CD4-positive, alpha-beta T cell (primary cell): ENCODE measurements at regions of chr9 and their contacts with region 1.

Region 1: DNA sequence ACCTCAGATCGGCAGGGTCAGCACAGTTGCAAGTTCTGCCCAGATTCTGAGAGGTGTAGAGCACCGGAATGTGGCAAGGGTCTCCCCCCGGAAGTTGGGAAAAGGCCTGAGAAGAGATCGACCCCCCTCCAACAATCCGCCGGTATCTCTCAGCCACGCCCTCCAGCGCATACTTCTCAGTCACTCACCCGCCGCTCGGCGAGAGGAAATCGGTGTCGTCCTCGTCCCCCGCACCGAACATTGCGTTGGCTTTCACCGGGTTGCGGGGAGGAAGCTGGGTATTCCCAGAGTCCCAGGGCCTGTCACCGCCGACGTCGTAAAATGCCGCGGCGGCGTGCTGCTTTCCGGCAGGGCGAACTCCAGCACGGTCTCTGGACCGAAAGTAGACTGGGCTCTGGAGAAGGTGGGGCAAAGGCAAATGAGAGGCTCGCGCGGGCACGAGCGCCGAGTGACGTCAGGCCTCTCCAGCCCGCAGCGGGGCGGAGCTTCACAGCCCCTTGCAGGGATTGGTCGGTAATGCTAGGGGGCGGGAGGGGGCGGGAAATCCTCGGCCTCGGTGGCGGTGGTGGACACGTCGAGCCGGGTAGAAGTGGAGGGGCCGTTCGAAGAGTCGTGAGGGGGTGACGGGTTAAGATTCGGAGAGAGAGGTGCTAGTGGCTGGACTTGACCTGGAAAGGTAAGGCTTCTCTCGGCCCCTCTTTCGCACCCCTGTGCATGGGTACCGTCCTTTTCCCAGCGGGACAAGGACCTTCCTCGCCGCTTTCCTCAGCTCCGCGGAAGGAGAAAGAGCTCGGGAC is at the starts of genes FKBP15 and SLC31A1:
- DNase-seq: peak; percentile 90 to 99 (median 94)
- ATAC-seq: peak; percentile 98
- H3K4me3 ChIP-seq: peak within 1 kb of the TSS; percentile 90
- H3K4me3 Mint-ChIP-seq: peak within 1 kb of the TSS; percentile 99
- H3K27ac ChIP-seq: peak within 1 kb of the TSS; percentile 82 to 84
- H3K27ac Mint-ChIP-seq: peak within 1 kb of the TSS; percentile 88
- H3K4me1 ChIP-seq: peaks cover 23% of the 10 kb centered on the region
- H3K4me1 Mint-ChIP-seq: peaks cover 59% of the 10 kb centered on the region
- H3K27me3 ChIP-seq: no peaks in the 10 kb centered on the region
- H3K27me3 Mint-ChIP-seq: no peaks in the 10 kb centered on the region
- CTCF ChIP-seq: no peak
- total RNA-seq, gene FKBP15: 11.9 to 14.2 TPM
- total RNA-seq, gene SLC31A1: 12.1 to 12.3 TPM

Region 2: DNA sequence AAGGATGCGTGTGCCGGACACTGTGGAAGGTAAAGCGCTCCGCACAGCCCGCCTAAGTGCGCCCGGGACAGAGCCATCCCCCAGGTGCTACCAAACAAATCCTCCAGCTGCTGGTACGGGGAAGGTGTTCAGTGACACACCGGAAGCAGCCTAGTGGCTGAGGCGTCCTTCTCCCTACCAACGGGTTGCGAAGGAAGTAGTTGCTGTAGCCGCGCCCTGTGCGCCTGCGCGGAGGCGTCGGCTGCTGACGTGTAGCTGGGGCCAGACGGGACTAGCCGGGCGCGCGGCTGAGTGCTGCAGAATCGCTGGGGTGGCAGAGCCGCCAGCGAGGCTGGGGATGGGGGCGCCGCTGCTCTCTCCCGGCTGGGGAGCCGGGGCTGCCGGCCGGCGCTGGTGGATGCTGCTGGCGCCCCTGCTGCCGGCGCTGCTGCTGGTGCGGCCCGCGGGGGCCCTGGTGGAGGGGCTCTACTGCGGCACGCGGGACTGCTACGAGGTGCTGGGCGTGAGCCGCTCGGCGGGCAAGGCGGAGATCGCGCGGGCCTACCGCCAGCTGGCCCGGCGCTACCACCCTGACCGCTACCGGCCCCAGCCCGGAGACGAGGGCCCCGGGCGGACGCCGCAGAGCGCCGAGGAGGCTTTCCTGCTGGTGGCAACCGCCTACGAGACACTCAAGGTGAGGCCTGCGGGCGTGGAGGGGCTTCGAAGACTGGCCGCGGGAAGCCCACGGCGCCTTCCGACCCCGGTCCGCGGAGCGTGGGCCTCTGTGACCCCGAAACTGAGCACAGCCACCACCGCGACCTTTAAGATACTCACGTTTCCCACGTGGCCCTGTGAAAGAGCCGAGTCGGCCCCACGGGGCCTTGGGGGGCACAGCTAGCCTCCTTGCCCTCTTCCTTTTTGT is 1589.9 kb before region 1 on chr9 and contains the start of gene DNAJC25:
- CTCF ChIA-PET with region 1: no interaction called
- POLR2A ChIA-PET with region 1: no interaction called
- intact Hi-C with region 1: loop called in 1 of 2 experiments (anchors 10 kb)
- DNase-seq: peak; percentile 91 to 100 (median 96)
- ATAC-seq: peak; percentile 92
- H3K4me3 ChIP-seq: peak within 1 kb of the TSS; percentile 74
- H3K4me3 Mint-ChIP-seq: peak within 1 kb of the TSS; percentile 99
- H3K27ac ChIP-seq: peak within 1 kb of the TSS; percentile 3 to 75
- H3K27ac Mint-ChIP-seq: peak within 1 kb of the TSS; percentile 90
- H3K4me1 ChIP-seq: peaks cover 18% of the 10 kb centered on the region
- H3K4me1 Mint-ChIP-seq: peaks cover 58% of the 10 kb centered on the region
- H3K27me3 ChIP-seq: no peaks in the 10 kb centered on the region
- H3K27me3 Mint-ChIP-seq: no peaks in the 10 kb centered on the region
- CTCF ChIP-seq: no peak
- total RNA-seq, gene DNAJC25: 4.5 to 4.8 TPM

Region 3: GRCh38 chr9:112486221-112487007 is 734.8 kb before region 1 on chr9 and contains the start of gene KIAA1958:
- CTCF ChIA-PET with region 1: no interaction called
- POLR2A ChIA-PET with region 1: no interaction called
- intact Hi-C with region 1: loop called in 1 of 2 experiments (anchors 2 kb)
- DNase-seq: peak; percentile 54 to 92 (median 76)
- ATAC-seq: peak; percentile 72
- H3K4me3 ChIP-seq: peak within 1 kb of the TSS; percentile 69
- H3K4me3 Mint-ChIP-seq: peak within 1 kb of the TSS; percentile 97
- H3K27ac ChIP-seq: peak within 1 kb of the TSS; percentile 44 to 62
- H3K27ac Mint-ChIP-seq: peak within 1 kb of the TSS; percentile 86
- H3K4me1 ChIP-seq: peaks cover 18% of the 10 kb centered on the region
- H3K4me1 Mint-ChIP-seq: peaks cover 45% of the 10 kb centered on the region
- H3K27me3 ChIP-seq: no peaks in the 10 kb centered on the region
- H3K27me3 Mint-ChIP-seq: no peaks in the 10 kb centered on the region
- CTCF ChIP-seq: no peak
- total RNA-seq, gene KIAA1958: 5.6 to 6.8 TPM

Region 4: DNA sequence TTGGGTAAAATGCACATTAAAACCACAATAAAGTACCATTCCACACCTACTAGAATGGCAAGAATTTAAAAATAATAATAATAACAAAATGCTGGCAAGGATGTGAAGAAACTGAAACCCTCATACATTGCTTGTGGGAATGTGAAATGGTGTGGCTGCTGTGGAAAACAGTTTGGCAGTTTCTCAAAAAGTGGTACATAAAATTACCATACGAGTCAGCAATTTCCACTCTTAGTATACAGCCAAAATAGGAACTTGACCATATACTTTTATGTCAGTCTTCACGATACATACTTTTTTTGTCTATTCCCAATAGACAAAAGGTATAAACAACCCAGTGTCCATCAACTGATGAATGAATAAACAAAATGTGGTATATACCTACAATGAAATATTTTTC is 15.8 kb before region 1 on chr9:
- CTCF ChIA-PET with region 1: no interaction called
- POLR2A ChIA-PET with region 1: no interaction called
- intact Hi-C with region 1: loop called in 1 of 2 experiments (anchors 1 kb)
- DNase-seq: no peak
- ATAC-seq: no peak
- H3K4me3 ChIP-seq: no peak overlapping the region
- H3K4me3 Mint-ChIP-seq: no peak overlapping the region
- H3K27ac ChIP-seq: no peak overlapping the region
- H3K27ac Mint-ChIP-seq: no peak overlapping the region
- H3K4me1 ChIP-seq: no peaks in the 10 kb centered on the region
- H3K4me1 Mint-ChIP-seq: no peaks in the 10 kb centered on the region
- H3K27me3 ChIP-seq: no peaks in the 10 kb centered on the region
- H3K27me3 Mint-ChIP-seq: no peaks in the 10 kb centered on the region
- CTCF ChIP-seq: no peak

Region 5: GRCh38 chr9:113275157-113276131 is 54.2 kb after region 1 on chr9 and contains the starts of genes CDC26 and PRPF4:
- CTCF ChIA-PET with region 1: interaction called, 10 read pairs
- POLR2A ChIA-PET with region 1: interaction called, 21 read pairs
- intact Hi-C with region 1: loop called (anchors 1 to 2 kb)
- DNase-seq: peak; percentile 88 to 98 (median 93)
- ATAC-seq: peak; percentile 91
- H3K4me3 ChIP-seq: peak within 1 kb of the TSS; percentile 77
- H3K4me3 Mint-ChIP-seq: no peak within 1 kb of the TSS
- H3K27ac ChIP-seq: peak within 1 kb of the TSS; percentile 93 to 94
- H3K27ac Mint-ChIP-seq: no peak within 1 kb of the TSS
- H3K4me1 ChIP-seq: peaks cover 6% of the 10 kb centered on the region
- H3K4me1 Mint-ChIP-seq: peaks cover 24% of the 10 kb centered on the region
- H3K27me3 ChIP-seq: no peaks in the 10 kb centered on the region
- H3K27me3 Mint-ChIP-seq: no peaks in the 10 kb centered on the region
- CTCF ChIP-seq: no peak
- total RNA-seq, gene CDC26: 15.8 to 18.0 TPM
- total RNA-seq, gene PRPF4: 23.4 to 25.5 TPM

Region 6: DNA sequence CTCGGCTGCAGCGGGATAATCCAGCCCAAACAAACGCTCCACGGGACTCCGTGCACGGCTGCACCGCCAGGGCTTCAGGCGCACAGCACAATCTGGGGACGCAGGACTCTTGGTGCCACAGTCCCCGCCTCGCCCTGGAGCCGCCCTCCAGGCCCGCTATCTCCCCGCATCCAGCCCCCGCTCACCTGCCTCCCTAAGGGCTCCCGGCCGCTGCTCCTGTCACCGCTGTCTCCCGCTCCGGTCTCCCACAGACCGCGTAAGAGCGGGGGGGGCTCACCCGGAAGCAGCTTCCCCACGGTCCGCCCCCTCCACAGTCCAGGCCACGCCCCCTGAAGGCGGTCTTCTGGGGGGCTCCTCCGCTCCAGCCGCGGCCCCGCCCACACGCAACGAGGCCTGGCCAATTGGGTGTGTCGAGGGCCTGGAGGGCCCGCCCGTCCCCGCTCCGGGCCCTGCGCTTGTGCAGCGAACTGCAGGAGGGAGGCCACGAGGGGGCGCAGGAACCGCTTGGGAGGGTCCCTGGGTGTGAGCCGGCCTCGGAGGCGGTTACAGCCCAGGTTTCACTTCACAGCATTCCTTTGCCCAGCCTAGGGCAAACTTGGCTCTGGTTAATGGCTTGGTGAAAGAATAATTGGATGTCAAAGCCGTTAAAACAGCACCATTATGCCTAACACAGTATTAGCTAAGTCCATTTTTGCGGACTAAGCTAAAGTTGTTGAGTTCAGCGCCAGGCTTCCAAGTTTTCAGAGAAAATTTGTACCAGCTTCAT is 180.0 kb after region 1 on chr9 and contains the start of gene ALAD:
- CTCF ChIA-PET with region 1: no interaction called
- POLR2A ChIA-PET with region 1: interaction called, 4 read pairs
- intact Hi-C with region 1: loop called in 1 of 2 experiments (anchors 2 kb)
- DNase-seq: peak; percentile 98 to 100 (median 99)
- ATAC-seq: peak; percentile 98
- H3K4me3 ChIP-seq: peak within 1 kb of the TSS; percentile 98
- H3K4me3 Mint-ChIP-seq: peak within 1 kb of the TSS; percentile 98
- H3K27ac ChIP-seq: peak within 1 kb of the TSS; percentile 50 to 54
- H3K27ac Mint-ChIP-seq: peak within 1 kb of the TSS; percentile 86
- H3K4me1 ChIP-seq: peaks cover 33% of the 10 kb centered on the region
- H3K4me1 Mint-ChIP-seq: peaks cover 34% of the 10 kb centered on the region
- H3K27me3 ChIP-seq: no peaks in the 10 kb centered on the region
- H3K27me3 Mint-ChIP-seq: no peaks in the 10 kb centered on the region
- CTCF ChIP-seq: peak; percentile 93
- total RNA-seq, gene ALAD: 14.5 to 15.0 TPM

Region 7: DNA sequence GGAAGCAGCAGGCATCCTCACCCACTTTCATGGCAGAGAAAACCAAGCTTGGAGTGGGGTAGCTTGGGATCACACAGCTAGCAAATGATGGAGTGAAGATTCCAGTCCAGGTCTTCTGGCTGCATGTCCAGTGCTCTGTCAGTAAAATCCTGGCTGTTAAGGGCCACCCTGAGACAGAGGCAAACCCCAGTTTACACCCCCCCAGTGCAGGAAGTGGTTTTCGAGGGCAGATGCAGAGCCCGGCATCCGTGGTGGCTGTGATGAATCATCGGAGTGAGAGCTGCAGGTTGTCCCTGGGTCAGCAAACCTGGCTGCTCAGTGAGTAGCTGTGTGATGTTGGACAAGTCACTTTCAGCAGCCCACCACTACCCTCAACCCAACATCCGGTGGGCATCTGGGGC is 357.7 kb after region 1 on chr9:
- CTCF ChIA-PET with region 1: no interaction called
- POLR2A ChIA-PET with region 1: interaction called, 3 read pairs
- intact Hi-C with region 1: loop called in 1 of 2 experiments (anchors 5 kb)
- DNase-seq: peak; percentile 58 to 93 (median 77)
- ATAC-seq: peak; percentile 59
- H3K4me3 ChIP-seq: peak overlapping the region; percentile 25
- H3K4me3 Mint-ChIP-seq: peak overlapping the region; percentile 85
- H3K27ac ChIP-seq: peak overlapping the region; percentile 72 to 77
- H3K27ac Mint-ChIP-seq: peak overlapping the region; percentile 94
- H3K4me1 ChIP-seq: peaks cover 74% of the 10 kb centered on the region
- H3K4me1 Mint-ChIP-seq: peaks cover 78% of the 10 kb centered on the region
- H3K27me3 ChIP-seq: no peaks in the 10 kb centered on the region
- H3K27me3 Mint-ChIP-seq: no peaks in the 10 kb centered on the region
- CTCF ChIP-seq: no peak

Region 8: DNA sequence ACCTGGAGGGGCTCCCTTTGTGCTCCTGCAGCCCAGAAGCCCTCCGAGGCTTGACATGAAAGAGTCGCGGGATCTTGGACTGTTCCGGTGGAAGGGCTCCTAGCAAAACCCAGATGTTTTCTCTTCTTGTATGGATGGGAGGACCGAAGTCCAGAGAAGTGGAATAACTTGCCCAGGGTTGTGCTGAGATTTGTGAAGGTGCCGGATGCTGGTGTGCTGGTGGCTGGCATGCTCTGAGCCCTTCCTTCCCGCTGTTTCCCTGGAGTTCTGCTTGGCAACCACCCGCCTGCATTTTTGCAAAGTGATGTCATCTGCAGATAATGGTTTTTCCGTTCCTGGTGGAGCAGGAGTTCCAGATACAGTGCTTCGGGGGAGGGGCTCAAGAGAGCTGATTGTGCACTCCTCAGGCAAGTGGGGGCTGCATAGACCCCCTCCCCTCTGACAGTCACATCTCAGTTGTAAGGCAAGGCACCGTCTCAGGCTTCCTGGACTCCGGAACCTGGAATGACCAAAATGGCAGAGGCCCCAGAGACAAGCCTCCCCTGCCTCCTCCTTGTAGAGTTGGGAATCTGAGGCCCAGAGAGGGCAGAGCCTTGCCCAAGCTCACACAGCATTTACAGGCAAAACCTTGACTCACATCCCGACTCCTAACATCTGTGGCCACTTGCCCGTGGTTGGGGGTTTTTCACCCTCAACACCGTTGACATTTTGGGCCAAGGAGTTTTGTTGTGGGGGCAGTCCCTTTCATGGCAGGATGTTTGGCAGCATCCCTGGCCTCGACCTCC is 399.4 kb after region 1 on chr9:
- CTCF ChIA-PET with region 1: no interaction called
- POLR2A ChIA-PET with region 1: no interaction called
- intact Hi-C with region 1: no loop called
- DNase-seq: peak in 1 of 14 experiments; percentile 24
- ATAC-seq: no peak
- H3K4me3 ChIP-seq: no peak overlapping the region
- H3K4me3 Mint-ChIP-seq: no peak overlapping the region
- H3K27ac ChIP-seq: no peak overlapping the region
- H3K27ac Mint-ChIP-seq: no peak overlapping the region
- H3K4me1 ChIP-seq: no peaks in the 10 kb centered on the region
- H3K4me1 Mint-ChIP-seq: no peaks in the 10 kb centered on the region
- H3K27me3 ChIP-seq: no peaks in the 10 kb centered on the region
- H3K27me3 Mint-ChIP-seq: peaks cover 4% of the 10 kb centered on the region
- CTCF ChIP-seq: no peak

Region 9: DNA sequence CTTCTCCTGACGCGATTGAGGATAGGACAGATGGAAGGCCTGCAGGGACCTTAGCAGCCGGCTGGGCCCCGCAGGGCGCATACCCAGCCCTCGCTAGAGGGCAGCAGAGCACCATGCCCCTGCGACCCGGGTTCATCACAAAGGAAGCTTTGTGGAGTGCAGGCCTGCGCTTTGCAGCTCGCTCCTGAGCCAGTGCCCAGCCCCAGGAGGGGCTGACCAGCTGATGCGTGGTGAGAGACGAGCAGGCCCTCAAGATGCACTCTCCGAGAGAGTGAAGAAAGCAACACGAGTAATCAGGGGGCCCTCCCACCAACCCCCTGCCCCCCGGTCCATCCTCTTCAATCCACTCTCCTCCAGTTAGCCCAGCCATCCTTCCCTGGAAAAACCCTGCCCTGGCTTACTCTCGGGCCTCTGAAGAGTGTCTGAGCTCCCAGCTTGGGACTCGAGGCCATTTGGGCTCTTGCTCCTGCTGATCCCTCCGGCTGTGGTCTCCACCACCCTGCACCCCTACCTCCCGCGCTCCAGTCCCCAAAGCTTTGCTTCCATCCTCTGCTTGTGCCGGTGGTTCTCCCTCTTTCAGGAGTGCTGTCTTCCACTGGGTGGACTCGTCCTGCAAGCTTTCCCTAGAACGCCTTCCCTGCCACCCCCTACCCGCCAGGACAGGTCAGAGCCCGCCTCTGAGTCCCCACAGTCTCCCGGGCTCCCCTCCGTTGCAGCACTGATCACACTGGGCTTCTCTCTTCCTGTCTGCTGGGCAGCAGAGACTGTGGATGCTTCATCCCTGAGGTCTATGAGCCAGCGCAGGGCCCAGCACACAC is 887.0 kb after region 1 on chr9:
- CTCF ChIA-PET with region 1: no interaction called
- POLR2A ChIA-PET with region 1: no interaction called
- intact Hi-C with region 1: no loop called
- DNase-seq: peak in 13 of 14 experiments; percentile 8 to 65 (median 31)
- ATAC-seq: no peak
- H3K4me3 ChIP-seq: no peak overlapping the region
- H3K4me3 Mint-ChIP-seq: no peak overlapping the region
- H3K27ac ChIP-seq: no peak overlapping the region
- H3K27ac Mint-ChIP-seq: no peak overlapping the region
- H3K4me1 ChIP-seq: no peaks in the 10 kb centered on the region
- H3K4me1 Mint-ChIP-seq: no peaks in the 10 kb centered on the region
- H3K27me3 ChIP-seq: peaks cover 0 to 8% of the 10 kb centered on the region in 2 experiments
- H3K27me3 Mint-ChIP-seq: peaks cover 8% of the 10 kb centered on the region
- CTCF ChIP-seq: peak; percentile 61